Heart right ventricle (tissue), 16 donors: ENCODE measurements at regions of chr11 and their contacts with region 1.

Region 1: DNA sequence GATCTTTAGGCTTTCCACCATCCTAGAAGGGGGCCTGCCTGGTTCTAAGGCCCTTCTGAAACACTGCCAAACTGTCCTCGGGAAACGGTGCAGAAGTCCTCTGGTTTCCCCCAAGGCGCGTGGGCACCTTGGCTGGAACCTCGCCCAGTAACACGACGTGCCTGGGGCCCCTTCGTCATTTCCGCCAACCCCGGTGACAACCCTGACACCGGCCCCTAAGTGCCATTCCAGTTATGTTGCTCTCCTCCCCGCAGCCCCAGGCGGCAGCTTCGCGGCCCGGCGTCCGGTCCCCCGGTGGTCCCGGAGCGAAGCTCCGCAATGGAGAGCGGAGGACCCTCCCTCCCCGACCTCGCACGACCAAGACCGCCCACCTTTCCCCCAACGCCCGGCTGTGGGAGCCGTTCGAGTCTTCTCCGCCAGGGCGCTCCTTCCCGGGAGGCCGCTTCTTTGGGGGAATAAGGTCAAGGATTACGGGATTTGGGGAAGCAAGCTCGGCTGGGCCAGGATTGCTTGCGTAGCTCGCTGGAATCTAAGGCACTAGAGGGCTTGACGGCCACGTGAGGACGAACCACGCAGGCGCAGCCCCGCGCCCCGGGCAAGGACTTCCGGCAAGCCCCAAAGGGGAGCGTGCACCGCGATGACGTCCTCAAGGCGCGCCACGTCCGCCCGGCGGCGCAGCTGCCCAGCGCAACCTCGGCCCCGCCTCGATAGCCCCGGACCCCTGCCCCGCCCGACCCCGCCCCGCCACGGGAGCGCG is 626 bp downstream of the RNH1 start:
- DNase-seq: peak; percentile 98 to 100
- ATAC-seq: peak; percentile 80 to 92 (median 90)
- H3K4me3 ChIP-seq: peak overlapping the region; percentile 71 to 98 (median 85)
- H3K27ac ChIP-seq: peak overlapping the region; percentile 95 to 100 (median 99)
- H3K4me1 ChIP-seq: peaks cover 24 to 58% (median 51%) of the 10 kb centered on the region in 9 donors
- H3K27me3 ChIP-seq: no peaks in the 10 kb centered on the region
- CTCF ChIP-seq: peak in 1 of 9 donors; percentile 23

Region 2: GRCh38 chr11:207208-207862 is 299.1 kb before region 1 on chr11 and contains the starts of genes BET1L and RIC8A:
- intact Hi-C with region 1: loop called in 2 of 10 experiments (anchors 10 kb)
- DNase-seq: peak; percentile 94 to 96
- ATAC-seq: peak; percentile 89 to 95 (median 93)
- H3K4me3 ChIP-seq: peak within 1 kb of the TSS; percentile 79 to 96 (median 90)
- H3K27ac ChIP-seq: peak within 1 kb of the TSS; percentile 96 to 100 (median 98)
- H3K4me1 ChIP-seq: peaks cover 20 to 64% (median 39%) of the 10 kb centered on the region in 9 donors
- H3K27me3 ChIP-seq: no peaks in the 10 kb centered on the region
- CTCF ChIP-seq: no peak
- total RNA-seq, gene BET1L: 18.7 to 32.0 (median 20.7) TPM
- total RNA-seq, gene RIC8A: 38.4 to 82.1 (median 59.5) TPM

Region 3: GRCh38 chr11:236774-237767 is 269.3 kb before region 1 on chr11 and contains the start of gene PSMD13:
- intact Hi-C with region 1: loop called in 1 of 10 experiments (anchors 5 kb)
- DNase-seq: peak; percentile 87
- ATAC-seq: peak; percentile 92 to 98 (median 95)
- H3K4me3 ChIP-seq: peak within 1 kb of the TSS; percentile 76 to 98 (median 90)
- H3K27ac ChIP-seq: peak within 1 kb of the TSS; percentile 86 to 98 (median 94)
- H3K4me1 ChIP-seq: peaks cover 0 to 46% (median 32%) of the 10 kb centered on the region in 9 donors
- H3K27me3 ChIP-seq: no peaks in the 10 kb centered on the region
- CTCF ChIP-seq: no peak
- total RNA-seq, gene PSMD13: 78.7 to 110 (median 90.4) TPM

Region 4: DNA sequence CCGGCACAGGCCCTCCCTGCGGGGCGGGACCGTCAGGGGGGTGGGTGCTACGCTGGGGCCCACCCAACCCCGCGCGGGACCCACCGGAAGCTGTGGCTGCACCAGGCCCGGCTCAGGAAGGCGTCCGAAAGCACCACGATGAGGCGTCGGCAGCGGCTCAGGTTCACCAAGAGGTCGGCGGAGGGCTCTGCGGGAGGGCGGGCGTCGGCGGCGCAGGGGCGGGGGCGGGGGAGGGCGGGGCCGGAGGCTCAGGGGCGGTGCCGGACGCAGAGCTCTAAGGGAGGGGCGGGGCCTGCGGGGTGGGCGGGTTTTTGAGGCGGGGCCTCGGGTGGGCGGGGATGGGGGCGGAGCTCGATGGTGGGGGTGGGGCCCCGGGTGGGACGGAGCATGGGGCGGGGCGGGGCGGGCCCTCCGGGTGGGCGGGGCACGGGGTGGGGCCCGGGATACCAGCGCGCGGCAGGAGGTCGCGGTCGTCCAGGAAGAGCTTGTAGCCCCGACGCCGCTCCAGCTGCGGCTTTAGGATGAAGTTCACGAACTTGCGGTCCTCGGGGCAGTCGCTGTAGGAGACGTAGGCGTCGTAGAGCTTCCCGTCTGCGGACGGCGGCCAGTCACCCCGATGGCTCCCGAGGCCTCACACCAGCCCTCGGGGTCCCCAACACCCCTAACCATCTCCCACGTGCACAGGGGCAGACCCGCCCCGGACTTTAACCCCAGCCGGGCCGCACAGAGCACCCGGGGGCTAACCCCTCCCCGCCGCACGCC is 99.3 kb before region 1 on chr11:
- intact Hi-C with region 1: loop called in 3 of 10 experiments (anchors 5 to 10 kb)
- DNase-seq: peak; percentile 82 to 85
- ATAC-seq: peak; percentile 72 to 83 (median 76)
- H3K4me3 ChIP-seq: peak overlapping the region; percentile 56 to 85 (median 70)
- H3K27ac ChIP-seq: peak overlapping the region; percentile 70 to 89 (median 82)
- H3K4me1 ChIP-seq: peaks cover 6 to 24% (median 18%) of the 10 kb centered on the region in 9 donors
- H3K27me3 ChIP-seq: no peaks in the 10 kb centered on the region
- CTCF ChIP-seq: peak in 2 of 9 donors; percentile 1 to 2

Region 5: DNA sequence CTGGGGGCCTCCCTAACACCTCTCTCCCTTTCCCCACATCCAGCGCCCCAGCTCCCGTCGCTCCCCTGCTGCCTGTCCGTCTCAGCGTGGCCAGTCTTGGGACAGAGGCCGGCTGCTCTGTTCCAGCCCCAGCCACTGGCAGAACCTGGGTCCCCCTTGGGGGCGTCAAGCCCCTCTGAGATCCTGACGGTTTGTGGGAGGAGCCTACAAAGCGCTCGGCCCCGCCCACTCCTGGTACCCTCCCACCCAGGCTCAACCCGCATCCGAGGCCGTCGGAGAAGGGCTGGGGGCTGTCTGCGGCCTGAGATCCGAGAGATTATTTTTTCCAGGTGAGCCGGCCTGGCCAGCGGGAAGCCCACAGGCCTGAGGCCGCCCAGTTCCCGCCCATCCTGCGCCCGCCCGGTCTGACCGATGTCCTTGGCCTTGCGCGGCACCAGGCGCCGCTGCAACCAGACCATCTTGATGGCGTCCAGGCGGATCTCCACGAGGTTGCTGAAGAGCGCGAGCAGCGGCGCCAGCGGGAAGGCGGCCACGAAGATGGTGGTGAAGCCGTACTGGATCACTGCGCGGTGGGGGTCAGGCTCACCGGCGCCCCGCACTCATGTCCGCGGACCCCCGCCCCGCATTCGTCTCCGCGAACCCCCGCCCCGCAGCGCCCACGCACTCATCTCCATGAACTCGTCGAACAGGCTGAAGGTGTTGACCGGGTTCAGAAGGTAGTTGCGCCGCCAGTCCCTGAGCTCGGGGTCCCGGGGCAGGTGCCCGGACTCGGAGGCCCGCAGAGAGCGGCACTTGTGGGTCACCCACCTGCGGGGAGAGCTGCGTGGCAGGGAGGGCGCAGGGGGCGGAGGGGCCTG is 86.1 kb before region 1 on chr11:
- intact Hi-C with region 1: no loop called
- DNase-seq: peak in 1 of 2 donors; percentile 14
- ATAC-seq: no peak
- H3K4me3 ChIP-seq: no peak overlapping the region
- H3K27ac ChIP-seq: no peak overlapping the region
- H3K4me1 ChIP-seq: peaks cover 0 to 27% (median 12%) of the 10 kb centered on the region in 9 donors
- H3K27me3 ChIP-seq: peaks cover 9 to 87% (median 68%) of the 10 kb centered on the region in 7 donors
- CTCF ChIP-seq: no peak

Region 6: GRCh38 chr11:469684-470560 is 36.5 kb before region 1 on chr11:
- intact Hi-C with region 1: loop called in 1 of 10 experiments (anchors 5 kb)
- DNase-seq: peak in 1 of 2 donors; percentile 50
- ATAC-seq: peak; percentile 49 to 89 (median 78)
- H3K4me3 ChIP-seq: peak overlapping the region in 9 of 10 donors; percentile 3 to 43 (median 27)
- H3K27ac ChIP-seq: peak overlapping the region; percentile 49 to 89 (median 76)
- H3K4me1 ChIP-seq: peaks cover 9 to 28% (median 22%) of the 10 kb centered on the region in 9 donors
- H3K27me3 ChIP-seq: no peaks in the 10 kb centered on the region
- CTCF ChIP-seq: peak in 5 of 9 donors; percentile 19 to 38 (median 30)

Region 7: GRCh38 chr11:535519-536454 is 29.4 kb after region 1 on chr11 and contains the start of gene HRAS:
- intact Hi-C with region 1: loop called in 1 of 10 experiments (anchors 2 kb)
- DNase-seq: peak; percentile 92 to 96
- ATAC-seq: peak; percentile 89 to 97 (median 94)
- H3K4me3 ChIP-seq: peak within 1 kb of the TSS; percentile 64 to 95 (median 86)
- H3K27ac ChIP-seq: peak within 1 kb of the TSS in 9 of 10 donors; percentile 73 to 88 (median 82)
- H3K4me1 ChIP-seq: peaks cover 15 to 51% (median 39%) of the 10 kb centered on the region in 9 donors
- H3K27me3 ChIP-seq: peaks cover 0 to 25% (median 14%) of the 10 kb centered on the region in 7 donors
- CTCF ChIP-seq: no peak
- total RNA-seq, gene HRAS: 44.7 to 61.1 (median 54.5) TPM